ENCODE measurements at regions of chr14 and their contacts with region 1.

Region 1: DNA sequence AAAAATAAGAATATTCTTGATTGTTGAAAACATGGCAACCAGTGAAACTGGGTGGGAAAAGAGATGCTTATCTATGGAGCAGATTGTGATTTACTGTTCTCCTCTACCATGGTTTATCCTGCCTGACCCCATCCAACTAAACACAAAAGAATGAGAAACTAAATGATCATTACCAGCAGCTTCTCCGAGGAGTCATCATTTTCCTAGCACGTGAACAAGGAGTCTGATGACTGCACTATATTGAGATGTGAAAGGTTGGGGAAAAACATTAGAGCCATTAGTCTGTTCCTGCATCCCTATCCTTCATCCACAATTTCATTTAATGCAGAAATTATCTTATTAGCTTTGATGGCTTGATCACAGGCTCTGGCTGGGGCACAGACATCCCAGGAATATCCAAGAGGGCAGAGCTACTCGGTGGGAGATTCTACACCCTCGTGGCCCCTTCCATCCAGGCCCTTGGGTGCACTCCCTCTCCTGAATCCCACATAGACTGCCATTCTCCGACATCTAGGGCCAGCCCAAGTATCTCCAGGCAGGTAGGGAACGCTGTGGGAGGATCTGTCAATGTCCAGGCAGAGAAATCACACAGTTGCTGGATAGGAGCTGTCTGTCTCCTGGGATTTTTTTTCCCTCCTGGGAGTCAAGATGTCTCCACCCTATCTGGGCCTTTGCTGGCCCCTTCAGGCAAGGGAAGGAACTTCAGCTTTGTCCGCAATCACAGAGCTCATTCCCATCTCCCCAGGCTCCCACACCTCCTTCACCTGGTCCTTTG is 43.3 kb upstream of the DHRS4 start:
- DNase-seq: peak; percentile 90
- ATAC-seq: peak; percentile 100
- H3K4me3 Mint-ChIP-seq: no peak overlapping the region
- H3K27ac Mint-ChIP-seq: no peak overlapping the region
- H3K4me1 Mint-ChIP-seq: peaks cover 10% of the 10 kb centered on the region
- H3K27me3 Mint-ChIP-seq: peaks cover 12% of the 10 kb centered on the region
- CTCF ChIP-seq: peak; percentile 71

Region 2: DNA sequence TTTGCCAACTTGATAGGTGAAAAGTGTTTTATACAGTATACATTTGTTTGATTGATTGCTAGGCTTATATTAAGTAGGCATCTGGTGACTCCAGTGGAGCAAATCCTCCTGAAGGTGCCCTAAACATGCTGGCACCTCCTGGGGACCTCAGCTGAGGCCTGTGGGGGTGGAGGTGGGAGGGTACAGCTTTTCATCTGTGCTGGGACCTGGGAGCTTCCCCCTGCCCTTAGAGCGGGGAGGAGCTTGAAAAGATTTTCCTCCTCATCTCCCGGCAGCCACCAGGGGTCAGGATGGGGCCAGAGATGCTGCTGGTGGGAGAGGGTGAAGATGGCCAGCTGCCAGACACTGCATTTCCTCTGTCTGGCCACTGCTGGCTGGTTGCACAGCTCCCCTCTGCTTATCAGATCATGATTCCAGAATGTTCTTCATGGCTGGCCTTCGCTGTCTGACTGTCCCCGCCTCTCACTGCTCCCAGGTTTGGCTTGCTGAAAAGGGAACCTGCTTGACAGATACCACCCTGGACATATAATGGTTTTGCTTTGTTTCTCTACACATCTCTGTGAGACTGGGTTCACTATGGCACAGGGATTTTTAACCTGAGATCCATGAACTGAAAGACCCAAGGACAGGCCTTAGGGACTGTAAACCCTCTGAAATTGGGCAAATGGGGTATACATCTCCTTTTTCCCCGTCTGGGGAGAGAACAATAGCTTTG is 321.2 kb before region 1 on chr14:
- CTCF ChIA-PET with region 1: interaction called, 77 read pairs
- POLR2A ChIA-PET with region 1: no interaction called
- DNase-seq: peak; percentile 91
- ATAC-seq: peak; percentile 100
- H3K4me3 Mint-ChIP-seq: no peak overlapping the region
- H3K27ac Mint-ChIP-seq: no peak overlapping the region
- H3K4me1 Mint-ChIP-seq: peaks cover 20% of the 10 kb centered on the region
- H3K27me3 Mint-ChIP-seq: peaks cover 16% of the 10 kb centered on the region
- CTCF ChIP-seq: peak; percentile 68

Region 3: GRCh38 chr14:23665375-23666192 is 244.7 kb before region 1 on chr14:
- CTCF ChIA-PET with region 1: interaction called, 77 read pairs
- POLR2A ChIA-PET with region 1: interaction called, 3 read pairs
- DNase-seq: peak; percentile 67
- ATAC-seq: peak; percentile 85
- H3K4me3 Mint-ChIP-seq: no peak overlapping the region
- H3K27ac Mint-ChIP-seq: no peak overlapping the region
- H3K4me1 Mint-ChIP-seq: peaks cover 5% of the 10 kb centered on the region
- H3K27me3 Mint-ChIP-seq: no peaks in the 10 kb centered on the region; the same call in 1 of the 2 replicates
- CTCF ChIP-seq: 0 out of 2 replicates have a peak, but pooled peaks have one; percentile 32

Region 4: DNA sequence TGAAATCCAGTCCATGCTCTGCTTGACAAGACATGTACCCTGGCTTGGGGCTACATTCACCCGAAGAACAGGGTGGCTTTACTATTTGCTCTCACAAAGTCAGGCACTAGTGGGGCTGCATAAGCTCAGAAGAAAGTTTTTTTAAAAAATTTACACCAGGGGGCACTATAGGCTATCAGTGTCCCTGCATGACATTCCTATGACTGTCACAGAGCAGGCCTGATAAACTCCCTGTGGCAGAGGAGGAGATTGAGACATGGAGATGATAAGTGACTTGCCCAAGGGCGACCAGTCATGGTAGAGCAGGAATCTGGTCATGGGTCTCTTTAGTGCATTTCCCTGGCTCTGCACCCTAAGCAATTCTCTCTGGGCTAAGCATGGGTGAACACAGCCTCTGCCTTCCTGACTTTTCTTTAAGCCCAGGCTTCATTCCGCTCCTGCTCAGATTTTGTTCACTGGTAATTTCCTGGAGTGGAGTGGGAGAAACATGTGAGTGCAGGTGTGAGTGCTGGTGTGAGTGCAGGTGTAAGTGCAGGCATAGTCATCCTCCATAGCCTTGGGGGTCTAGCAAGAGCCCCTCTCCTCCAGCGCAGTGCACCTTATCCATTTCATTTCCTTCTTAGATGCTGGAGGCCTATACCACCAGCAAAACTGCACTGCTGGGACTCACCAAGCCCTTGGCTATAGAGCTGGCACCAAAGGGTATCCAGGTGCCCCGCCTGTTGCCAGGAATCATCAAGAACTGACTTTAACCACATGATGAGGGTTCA is 182.5 kb before region 1 on chr14:
- CTCF ChIA-PET with region 1: interaction called, 95 read pairs
- POLR2A ChIA-PET with region 1: no interaction called
- DNase-seq: no peak
- ATAC-seq: peak; percentile 86
- H3K4me3 Mint-ChIP-seq: no peak overlapping the region
- H3K27ac Mint-ChIP-seq: no peak overlapping the region
- H3K4me1 Mint-ChIP-seq: no peaks in the 10 kb centered on the region
- H3K27me3 Mint-ChIP-seq: no peaks in the 10 kb centered on the region
- CTCF ChIP-seq: peak; percentile 61

Region 5: DNA sequence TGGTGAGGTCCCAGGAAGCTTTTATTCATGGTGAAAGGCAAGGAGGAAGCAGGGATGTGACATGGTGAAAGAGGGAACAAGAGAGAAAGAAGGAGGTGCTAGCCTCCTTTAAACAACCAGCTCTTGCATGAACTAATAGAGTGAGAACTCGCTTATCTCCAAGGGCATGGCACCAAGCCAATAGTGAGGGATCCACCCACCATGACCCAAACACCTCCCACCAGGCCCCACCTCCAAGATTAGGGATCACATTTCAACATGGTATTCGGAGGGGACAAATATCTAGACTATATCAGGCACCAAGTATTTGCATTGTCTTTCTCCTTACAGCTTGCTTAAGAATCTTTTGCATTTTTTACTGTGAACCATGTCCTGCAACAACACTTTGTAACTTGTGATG is 48.6 kb before region 1 on chr14:
- CTCF ChIA-PET with region 1: interaction called, 13 read pairs
- POLR2A ChIA-PET with region 1: no interaction called
- DNase-seq: no peak
- ATAC-seq: peak; percentile 56; the same call in 1 of the 2 replicates
- H3K4me3 Mint-ChIP-seq: no peak overlapping the region
- H3K27ac Mint-ChIP-seq: no peak overlapping the region
- H3K4me1 Mint-ChIP-seq: peaks cover 17% of the 10 kb centered on the region
- H3K27me3 Mint-ChIP-seq: no peaks in the 10 kb centered on the region; the same call in none of the 2 replicates
- CTCF ChIP-seq: no peak

Region 6: GRCh38 chr14:23895480-23895879 is 14.8 kb before region 1 on chr14:
- CTCF ChIA-PET with region 1: interaction called, 28 read pairs
- POLR2A ChIA-PET with region 1: no interaction called
- DNase-seq: no peak
- ATAC-seq: peak; percentile 28; the same call in 1 of the 2 replicates
- H3K4me3 Mint-ChIP-seq: no peak overlapping the region
- H3K27ac Mint-ChIP-seq: no peak overlapping the region
- H3K4me1 Mint-ChIP-seq: no peaks in the 10 kb centered on the region
- H3K27me3 Mint-ChIP-seq: peaks cover 10% of the 10 kb centered on the region
- CTCF ChIP-seq: no peak

Region 7: GRCh38 chr14:23929822-23930294 is 19.6 kb after region 1 on chr14:
- CTCF ChIA-PET with region 1: interaction called, 18 read pairs
- POLR2A ChIA-PET with region 1: interaction called, 4 read pairs
- DNase-seq: peak; percentile 91
- ATAC-seq: peak; percentile 96
- H3K4me3 Mint-ChIP-seq: no peak overlapping the region
- H3K27ac Mint-ChIP-seq: no peak overlapping the region
- H3K4me1 Mint-ChIP-seq: no peaks in the 10 kb centered on the region; the same call in 1 of the 2 replicates
- H3K27me3 Mint-ChIP-seq: peaks cover 6% of the 10 kb centered on the region
- CTCF ChIP-seq: peak; percentile 98

Region 8: GRCh38 chr14:23984891-23985602 is 74.8 kb after region 1 on chr14:
- CTCF ChIA-PET with region 1: no interaction called
- POLR2A ChIA-PET with region 1: no interaction called
- DNase-seq: no peak
- ATAC-seq: no peak
- H3K4me3 Mint-ChIP-seq: no peak overlapping the region
- H3K27ac Mint-ChIP-seq: no peak overlapping the region
- H3K4me1 Mint-ChIP-seq: peaks cover 13% of the 10 kb centered on the region
- H3K27me3 Mint-ChIP-seq: peaks cover 12% of the 10 kb centered on the region
- CTCF ChIP-seq: no peak

Region 9: DNA sequence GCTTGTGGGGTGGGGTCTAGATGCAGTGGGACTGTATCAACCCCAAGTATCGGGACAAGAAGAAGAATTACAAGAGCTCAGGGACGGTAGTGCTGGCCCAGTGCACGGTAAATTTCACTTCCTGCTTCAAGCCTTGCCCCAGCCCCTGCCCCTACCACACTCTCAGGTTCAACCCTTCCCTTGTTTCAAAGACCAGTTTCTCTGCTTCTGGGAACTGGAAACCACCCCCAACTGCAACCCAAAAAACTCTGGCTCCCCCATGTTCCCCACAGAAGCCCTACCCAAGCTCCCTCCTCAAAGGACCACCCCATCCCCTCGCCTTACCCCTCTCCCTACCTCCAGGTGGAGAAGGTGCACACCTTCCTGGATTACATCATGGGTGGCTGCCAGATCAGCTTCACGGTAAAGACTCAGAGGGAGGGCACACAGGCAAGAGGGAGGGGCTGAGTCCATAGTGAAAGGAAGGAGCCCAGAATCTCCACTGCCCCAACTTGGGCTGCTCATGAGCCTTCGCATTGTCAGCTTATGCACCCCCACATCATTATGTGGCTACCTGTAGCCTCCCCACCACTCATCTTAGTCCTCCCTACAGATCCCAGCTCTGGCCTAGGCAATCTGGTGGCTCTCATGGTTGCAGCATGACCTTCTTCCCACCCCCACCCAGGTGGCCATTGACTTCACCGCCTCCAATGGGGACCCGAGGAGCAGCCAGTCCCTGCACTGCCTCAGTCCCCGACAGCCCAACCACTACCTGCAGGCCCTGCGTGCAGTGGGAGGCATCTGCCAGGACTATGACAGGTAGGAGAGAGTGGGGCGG is 165.4 kb after region 1 on chr14:
- CTCF ChIA-PET with region 1: no interaction called
- POLR2A ChIA-PET with region 1: no interaction called
- DNase-seq: no peak
- ATAC-seq: no peak
- H3K4me3 Mint-ChIP-seq: no peak overlapping the region
- H3K27ac Mint-ChIP-seq: no peak overlapping the region
- H3K4me1 Mint-ChIP-seq: peaks cover 26% of the 10 kb centered on the region
- H3K27me3 Mint-ChIP-seq: peaks cover 2% of the 10 kb centered on the region
- CTCF ChIP-seq: no peak

Region 10: GRCh38 chr14:24339284-24340151 is 429.2 kb after region 1 on chr14 and contains the start of gene RIPK3:
- CTCF ChIA-PET with region 1: no interaction called
- POLR2A ChIA-PET with region 1: no interaction called
- DNase-seq: peak; percentile 68
- ATAC-seq: peak; percentile 69
- H3K4me3 Mint-ChIP-seq: peak within 1 kb of the TSS; percentile 80
- H3K27ac Mint-ChIP-seq: no peak within 1 kb of the TSS
- H3K4me1 Mint-ChIP-seq: peaks cover 13% of the 10 kb centered on the region
- H3K27me3 Mint-ChIP-seq: peaks cover 95% of the 10 kb centered on the region
- CTCF ChIP-seq: no peak
- total RNA-seq, gene RIPK3: 0.37 to 1.2 TPM (median 0.83 TPM) in 3 replicates